ENCODE measurements at regions of chr12 and their contacts with region 1.

Region 1: DNA sequence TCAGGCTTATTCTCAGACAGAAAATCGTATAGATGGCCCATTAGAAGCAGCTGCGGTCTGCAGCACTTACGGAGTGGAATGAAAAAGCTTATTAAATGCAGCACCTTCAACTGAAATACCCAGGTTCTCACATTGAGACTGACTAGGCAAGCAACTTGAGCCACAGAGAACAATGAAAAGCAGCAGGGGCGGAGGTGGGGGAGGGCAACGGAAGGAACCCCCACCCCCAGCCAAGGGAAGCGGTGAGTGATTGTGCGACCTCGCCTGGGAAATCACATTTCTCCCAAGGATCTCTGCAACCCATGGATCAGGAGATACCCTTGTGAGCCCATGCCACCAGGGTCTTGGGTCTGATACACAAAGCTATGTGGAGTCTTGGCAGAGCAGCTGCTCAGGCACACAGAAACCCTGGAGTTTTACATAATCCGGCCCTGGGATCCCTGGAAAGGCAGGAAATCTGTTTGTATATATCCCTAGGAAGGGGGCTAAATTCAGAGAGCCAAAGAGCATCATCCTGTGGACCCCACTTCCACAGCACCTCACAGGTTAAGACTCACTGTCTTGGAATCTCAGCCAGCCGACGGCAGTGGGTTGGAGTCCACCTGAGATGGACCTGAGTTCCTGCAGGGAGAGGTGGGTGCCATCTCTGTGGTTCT is 38.1 kb downstream of the PZP start:
- DNase-seq: peak; percentile 92
- H3K4me3 ChIP-seq: no peak overlapping the region
- H3K27ac ChIP-seq: peak overlapping the region; percentile 46
- H3K4me1 ChIP-seq: peaks cover 38% of the 10 kb centered on the region
- H3K27me3 ChIP-seq: no peaks in the 10 kb centered on the region
- CTCF ChIP-seq: no peak
- POLR2A ChIP-seq: no peak

Region 2: DNA sequence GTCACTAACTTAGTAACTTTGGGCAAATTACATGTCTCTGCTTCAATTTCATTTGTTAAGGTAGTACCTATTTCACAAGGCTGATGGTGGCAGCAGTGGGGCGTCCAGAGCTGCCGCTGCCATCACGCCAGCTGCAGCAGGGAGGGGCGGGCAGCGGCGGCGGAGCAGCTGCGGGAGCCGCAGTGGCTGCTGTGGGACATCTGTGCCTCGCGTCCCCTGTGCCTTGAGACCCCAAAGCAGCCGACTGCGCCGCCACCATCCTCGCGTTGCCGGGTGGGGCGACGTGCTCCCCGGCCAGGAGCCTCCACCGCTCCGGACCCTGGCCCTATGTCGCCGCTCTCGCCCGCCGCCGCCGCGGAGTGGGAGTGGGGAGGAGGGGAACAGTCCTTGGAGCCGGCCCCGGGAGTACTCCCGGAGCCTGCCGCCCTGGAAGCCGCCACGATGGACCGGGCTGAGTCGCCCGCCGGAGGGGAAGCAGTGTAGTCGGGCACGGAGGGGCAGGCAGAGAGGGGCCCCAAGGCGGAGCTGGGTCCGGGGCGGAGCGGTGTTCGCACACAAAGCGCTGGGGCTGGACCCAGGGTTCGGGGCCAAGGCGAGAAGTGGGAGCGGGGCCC is 105.8 kb before region 1 on chr12:
- CTCF ChIA-PET with region 1: interaction called, 4 read pairs
- POLR2A ChIA-PET with region 1: no interaction called
- dilution Hi-C with region 1: no loop called
- intact Hi-C with region 1: loop called (anchors 10 kb)
- DNase-seq: peak; percentile 83
- H3K4me3 ChIP-seq: peak overlapping the region; percentile 69 to 95 (median 76)
- H3K27ac ChIP-seq: peak overlapping the region; percentile 57
- H3K4me1 ChIP-seq: peaks cover 4% of the 10 kb centered on the region
- H3K27me3 ChIP-seq: peaks cover 4 to 6% of the 10 kb centered on the region in 2 experiments
- CTCF ChIP-seq: peak; percentile 32 to 57
- POLR2A ChIP-seq: no peak